MCF 10A (cell line): ENCODE measurements at regions of chr17 and their contacts with region 1.

Region 1: GRCh38 chr17:32444308-32445073 is at the start of gene PSMD11:
- DNase-seq: peak; percentile 97
- H3K4me3 Mint-ChIP-seq: peak within 1 kb of the TSS; percentile 91
- H3K27ac Mint-ChIP-seq: peak within 1 kb of the TSS; percentile 78
- H3K4me1 Mint-ChIP-seq: peaks cover 19% of the 10 kb centered on the region
- H3K27me3 Mint-ChIP-seq: no peaks in the 10 kb centered on the region
- CTCF ChIP-seq: peak; percentile 69
- total RNA-seq, gene PSMD11: 123 and 134 TPM in 2 replicates

Region 2: GRCh38 chr17:32253117-32253611 is 191.3 kb before region 1 on chr17:
- CTCF ChIA-PET with region 1: no interaction called
- POLR2A ChIA-PET with region 1: no interaction called
- intact Hi-C with region 1: loop called (anchors 2 kb)
- DNase-seq: peak; percentile 82
- H3K4me3 Mint-ChIP-seq: no peak overlapping the region
- H3K27ac Mint-ChIP-seq: no peak overlapping the region
- H3K4me1 Mint-ChIP-seq: no peaks in the 10 kb centered on the region
- H3K27me3 Mint-ChIP-seq: no peaks in the 10 kb centered on the region
- CTCF ChIP-seq: peak; percentile 92

Region 3: GRCh38 chr17:32311028-32311536 is 133.4 kb before region 1 on chr17:
- CTCF ChIA-PET with region 1: no interaction called
- POLR2A ChIA-PET with region 1: no interaction called
- intact Hi-C with region 1: no loop called
- DNase-seq: no peak
- H3K4me3 Mint-ChIP-seq: no peak overlapping the region
- H3K27ac Mint-ChIP-seq: no peak overlapping the region
- H3K4me1 Mint-ChIP-seq: no peaks in the 10 kb centered on the region
- H3K27me3 Mint-ChIP-seq: peaks cover 23% of the 10 kb centered on the region
- CTCF ChIP-seq: no peak

Region 4: GRCh38 chr17:32349854-32350665 is 94.4 kb before region 1 on chr17 and contains the start of gene ZNF207:
- CTCF ChIA-PET with region 1: no interaction called
- POLR2A ChIA-PET with region 1: interaction called, 20 read pairs
- intact Hi-C with region 1: loop called (anchors 10 kb)
- DNase-seq: peak; percentile 97
- H3K4me3 Mint-ChIP-seq: peak within 1 kb of the TSS; percentile 99
- H3K27ac Mint-ChIP-seq: peak within 1 kb of the TSS; percentile 100
- H3K4me1 Mint-ChIP-seq: peaks cover 13% of the 10 kb centered on the region
- H3K27me3 Mint-ChIP-seq: no peaks in the 10 kb centered on the region
- CTCF ChIP-seq: no peak
- total RNA-seq, gene ZNF207: 167 and 179 TPM in 2 replicates

Region 5: GRCh38 chr17:32429598-32429997 is 14.9 kb before region 1 on chr17:
- CTCF ChIA-PET with region 1: interaction called, 8 read pairs
- POLR2A ChIA-PET with region 1: interaction called, 10 read pairs
- intact Hi-C with region 1: no loop called
- DNase-seq: no peak
- H3K4me3 Mint-ChIP-seq: no peak overlapping the region
- H3K27ac Mint-ChIP-seq: no peak overlapping the region
- H3K4me1 Mint-ChIP-seq: no peaks in the 10 kb centered on the region
- H3K27me3 Mint-ChIP-seq: no peaks in the 10 kb centered on the region
- CTCF ChIP-seq: no peak

Region 6: GRCh38 chr17:32461853-32462617 is 17.5 kb after region 1 on chr17:
- CTCF ChIA-PET with region 1: interaction called, 22 read pairs
- POLR2A ChIA-PET with region 1: interaction called, 4 read pairs
- intact Hi-C with region 1: no loop called
- DNase-seq: peak; percentile 78
- H3K4me3 Mint-ChIP-seq: no peak overlapping the region
- H3K27ac Mint-ChIP-seq: no peak overlapping the region
- H3K4me1 Mint-ChIP-seq: peaks cover 6% of the 10 kb centered on the region
- H3K27me3 Mint-ChIP-seq: no peaks in the 10 kb centered on the region
- CTCF ChIP-seq: peak; percentile 53

Region 7: DNA sequence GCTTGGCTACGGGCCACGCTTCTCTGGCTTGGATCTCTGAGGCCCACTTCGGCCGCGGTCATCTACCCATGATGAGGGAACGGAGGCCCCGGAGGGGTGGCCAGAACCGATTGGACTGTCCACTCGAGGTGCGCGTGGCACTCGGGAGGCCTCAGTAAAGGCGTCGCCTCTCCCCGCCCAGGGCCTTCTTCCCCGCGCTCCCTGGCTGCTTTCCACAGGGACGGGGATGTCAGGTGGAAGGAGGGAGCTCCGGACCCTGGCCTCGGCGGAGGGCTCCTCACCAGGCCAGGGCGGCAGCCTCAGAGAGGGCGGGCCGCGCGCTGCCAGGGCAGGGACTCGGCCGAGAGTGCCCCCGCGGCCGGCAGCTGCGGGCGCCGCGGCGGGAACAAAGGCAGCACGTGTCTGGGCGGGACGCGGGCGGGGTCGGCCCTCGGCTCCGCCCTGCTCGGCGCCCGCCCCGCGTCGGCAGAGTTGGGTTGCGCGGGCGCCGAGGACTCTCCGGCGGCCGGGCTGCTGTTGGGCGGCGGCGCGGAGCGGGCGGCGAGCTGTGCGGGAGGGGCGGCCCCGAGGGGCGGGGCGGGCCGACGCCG is 41.7 kb after region 1 on chr17:
- CTCF ChIA-PET with region 1: interaction called, 3 read pairs
- POLR2A ChIA-PET with region 1: interaction called, 11 read pairs
- intact Hi-C with region 1: no loop called
- DNase-seq: peak; percentile 75
- H3K4me3 Mint-ChIP-seq: peak overlapping the region; percentile 80
- H3K27ac Mint-ChIP-seq: no peak overlapping the region
- H3K4me1 Mint-ChIP-seq: peaks cover 20% of the 10 kb centered on the region
- H3K27me3 Mint-ChIP-seq: no peaks in the 10 kb centered on the region
- CTCF ChIP-seq: no peak